ENCODE measurements at regions of chr5 and their contacts with region 1.

Region 1: GRCh38 chr5:35672995-35673394 is 55.3 kb downstream of the SPEF2 start:
- DNase-seq: no peak
- ATAC-seq: peak; percentile 65
- H3K4me3 Mint-ChIP-seq: no peak overlapping the region
- H3K27ac Mint-ChIP-seq: no peak overlapping the region
- H3K4me1 Mint-ChIP-seq: peaks cover 11% of the 10 kb centered on the region
- H3K27me3 Mint-ChIP-seq: no peaks in the 10 kb centered on the region
- CTCF ChIP-seq: no peak

Region 2: GRCh38 chr5:35608881-35609779 is 63.9 kb before region 1 on chr5:
- CTCF ChIA-PET with region 1: no interaction called
- POLR2A ChIA-PET with region 1: no interaction called
- DNase-seq: no peak
- ATAC-seq: no peak
- H3K4me3 Mint-ChIP-seq: no peak overlapping the region
- H3K27ac Mint-ChIP-seq: no peak overlapping the region
- H3K4me1 Mint-ChIP-seq: no peaks in the 10 kb centered on the region
- H3K27me3 Mint-ChIP-seq: peaks cover 10% of the 10 kb centered on the region
- CTCF ChIP-seq: no peak

Region 3: DNA sequence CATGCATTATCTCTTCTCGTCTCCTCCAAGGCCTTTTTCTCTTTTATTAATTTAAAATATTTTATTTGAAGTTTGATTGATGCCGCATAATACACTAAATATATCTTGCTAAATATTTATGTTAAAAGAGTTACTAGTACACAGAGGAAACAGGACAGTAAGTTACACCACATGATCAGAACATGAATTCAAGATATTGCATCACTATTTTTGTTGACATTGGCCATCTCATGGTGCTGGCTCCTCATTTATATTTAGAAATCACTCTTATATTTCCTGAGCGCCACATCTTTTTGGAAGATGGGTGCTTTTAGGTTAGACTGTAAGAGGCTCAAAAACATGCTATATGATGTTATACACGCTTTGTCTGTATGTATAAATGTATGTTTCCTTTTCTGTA is 32.4 kb before region 1 on chr5:
- CTCF ChIA-PET with region 1: no interaction called
- POLR2A ChIA-PET with region 1: no interaction called
- DNase-seq: no peak
- ATAC-seq: no peak
- H3K4me3 Mint-ChIP-seq: no peak overlapping the region
- H3K27ac Mint-ChIP-seq: no peak overlapping the region
- H3K4me1 Mint-ChIP-seq: no peaks in the 10 kb centered on the region
- H3K27me3 Mint-ChIP-seq: peaks cover 9% of the 10 kb centered on the region; the same call in 1 of the 2 replicates
- CTCF ChIP-seq: no peak

Region 4: GRCh38 chr5:35651002-35651756 is 21.8 kb before region 1 on chr5:
- CTCF ChIA-PET with region 1: interaction called, 12 read pairs
- POLR2A ChIA-PET with region 1: no interaction called
- DNase-seq: peak; percentile 59
- ATAC-seq: peak; percentile 97
- H3K4me3 Mint-ChIP-seq: no peak overlapping the region
- H3K27ac Mint-ChIP-seq: no peak overlapping the region
- H3K4me1 Mint-ChIP-seq: peaks cover 17% of the 10 kb centered on the region
- H3K27me3 Mint-ChIP-seq: no peaks in the 10 kb centered on the region
- CTCF ChIP-seq: 0 out of 2 replicates have a peak, but pooled peaks have one; percentile 17